Breast epithelium (tissue), 4 donors: ENCODE measurements at regions of chr7 and their contacts with region 1.

Region 1: DNA sequence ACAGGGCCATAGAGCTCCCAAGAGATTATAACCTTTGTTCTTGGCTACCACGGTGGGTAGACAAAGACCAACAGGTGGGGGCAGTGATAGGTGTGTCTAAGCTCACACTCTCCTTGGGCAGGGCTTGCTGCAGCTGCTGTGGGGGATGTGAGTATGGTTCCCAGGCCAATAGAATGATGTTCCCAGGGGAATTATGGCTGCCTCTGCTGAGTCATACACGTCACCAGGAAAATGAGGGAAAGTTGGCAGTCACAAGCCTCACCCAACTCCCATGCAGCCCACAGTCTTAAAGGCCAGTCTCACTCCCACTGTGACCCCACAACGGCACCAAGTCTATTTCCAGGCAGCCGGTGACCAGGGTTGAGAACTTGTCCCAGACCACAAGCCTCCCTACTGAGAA is 453.4 kb upstream of the PODXL start:
- DNase-seq: no peak
- H3K4me3 ChIP-seq: no peak overlapping the region
- H3K27ac ChIP-seq: no peak overlapping the region
- H3K4me1 ChIP-seq: no peaks in the 10 kb centered on the region
- H3K27me3 ChIP-seq: no peaks in the 10 kb centered on the region
- CTCF ChIP-seq: no peak
- POLR2A ChIP-seq: no peak

Region 2: GRCh38 chr7:131400833-131401593 is 608.8 kb before region 1 on chr7:
- intact Hi-C with region 1: no loop called
- DNase-seq: no peak
- H3K4me3 ChIP-seq: no peak overlapping the region
- H3K27ac ChIP-seq: peak overlapping the region; percentile 62 to 72
- H3K4me1 ChIP-seq: no peaks in the 10 kb centered on the region
- H3K27me3 ChIP-seq: no peaks in the 10 kb centered on the region
- CTCF ChIP-seq: no peak
- POLR2A ChIP-seq: no peak

Region 3: DNA sequence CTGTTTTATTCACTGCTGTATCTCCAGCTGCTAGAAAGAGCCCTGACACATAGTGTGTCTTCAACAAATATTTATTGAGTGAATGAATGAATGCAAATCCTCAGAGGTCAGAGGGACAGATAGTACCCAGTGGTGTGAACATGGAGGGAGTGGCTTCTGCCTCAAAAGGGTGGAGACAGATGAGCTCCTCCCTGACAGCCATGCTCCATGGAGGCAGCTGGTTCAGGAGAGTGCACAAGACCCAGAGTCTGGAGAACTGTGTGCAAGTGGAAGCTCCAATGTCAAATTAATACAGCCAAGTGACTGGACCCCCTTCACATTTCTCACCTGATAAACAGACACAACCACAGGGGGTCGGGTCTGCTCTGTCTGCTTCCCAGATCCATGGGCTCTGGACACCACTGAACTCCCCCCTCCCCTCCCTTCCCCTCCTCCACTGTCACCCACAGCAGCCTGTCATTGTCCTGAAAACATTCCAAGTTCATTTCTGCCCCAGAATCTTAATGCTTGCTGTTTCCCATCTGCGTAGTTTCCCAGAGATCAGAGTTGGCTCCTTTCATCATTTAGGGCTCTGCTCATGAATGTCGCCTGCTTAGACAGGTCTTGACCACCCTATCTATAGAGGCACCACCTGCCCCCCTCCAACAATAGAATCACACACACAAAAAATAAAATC is 140.5 kb before region 1 on chr7:
- intact Hi-C with region 1: loop called (anchors 5 kb)
- DNase-seq: no peak
- H3K4me3 ChIP-seq: no peak overlapping the region
- H3K27ac ChIP-seq: no peak overlapping the region
- H3K4me1 ChIP-seq: no peaks in the 10 kb centered on the region
- H3K27me3 ChIP-seq: no peaks in the 10 kb centered on the region
- CTCF ChIP-seq: no peak
- POLR2A ChIP-seq: no peak